ENCODE measurements at regions of chr18 and their contacts with region 1.

Region 1: GRCh38 chr18:3447895-3448837 is 1.8 kb upstream of the TGIF1 start:
- DNase-seq: peak; percentile 96
- H3K4me3 ChIP-seq: peak overlapping the region; percentile 56 to 80 (median 74)
- H3K27ac ChIP-seq: peak overlapping the region; percentile 94 to 99 (median 99)
- H3K4me1 ChIP-seq: peaks cover 5 to 46% (median 26%) of the 10 kb centered on the region in 6 donors
- H3K27me3 ChIP-seq: no peaks in the 10 kb centered on the region
- CTCF ChIP-seq: peak in 3 of 11 experiments; percentile 11 to 34 (median 14)
- POLR2A ChIP-seq: peak in 2 of 3 donors; percentile 22 to 82

Region 2: DNA sequence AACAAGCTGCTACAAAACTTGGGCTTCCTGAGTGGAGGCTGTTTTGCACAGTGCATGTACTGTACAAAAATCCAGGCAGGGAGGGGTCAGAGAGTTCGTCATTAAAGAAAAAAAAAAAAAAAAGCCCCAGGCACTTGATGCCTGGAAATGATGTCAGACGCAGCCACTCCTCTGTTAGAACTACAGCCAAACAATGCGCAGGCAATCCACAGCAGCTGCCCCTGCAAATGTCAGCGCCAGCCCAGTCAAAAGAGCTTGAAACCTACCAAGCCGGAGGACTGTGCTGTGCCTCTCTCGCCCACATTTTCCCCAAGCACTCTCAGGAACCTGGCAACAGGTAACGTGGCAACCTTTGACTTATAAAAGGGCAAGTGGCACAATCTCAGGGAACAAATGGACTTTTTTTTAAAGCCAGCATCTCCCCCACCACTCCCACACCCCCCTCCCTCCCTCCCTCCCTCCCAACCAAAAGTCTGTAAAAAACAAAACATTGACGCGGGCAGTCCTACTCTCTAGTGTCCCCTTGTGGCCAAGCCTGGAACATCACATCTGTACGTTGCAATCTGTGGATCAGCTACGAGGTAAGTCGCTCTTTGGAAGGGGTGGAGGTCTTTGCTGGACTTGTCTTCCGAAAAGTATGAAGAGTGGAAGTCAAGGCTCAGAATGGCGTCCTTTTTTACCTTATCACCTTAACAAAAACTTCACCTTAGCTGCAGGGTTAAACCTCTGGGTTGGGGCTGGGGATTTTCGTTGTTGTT is 145.9 kb after region 1 on chr18:
- intact Hi-C with region 1: loop called (anchors 5 kb)
- DNase-seq: peak; percentile 92
- H3K4me3 ChIP-seq: peak overlapping the region; percentile 27 to 75 (median 44)
- H3K27ac ChIP-seq: peak overlapping the region; percentile 94 to 98 (median 96)
- H3K4me1 ChIP-seq: peaks cover 38 to 66% (median 52%) of the 10 kb centered on the region in 6 donors
- H3K27me3 ChIP-seq: no peaks in the 10 kb centered on the region
- CTCF ChIP-seq: peak; percentile 65 to 95 (median 89)
- POLR2A ChIP-seq: peak in 2 of 3 donors; percentile 51 to 78

Measured in spleen (tissue), 13 donors.